ENCODE measurements at regions of chr2 and their contacts with region 1.

Region 1: DNA sequence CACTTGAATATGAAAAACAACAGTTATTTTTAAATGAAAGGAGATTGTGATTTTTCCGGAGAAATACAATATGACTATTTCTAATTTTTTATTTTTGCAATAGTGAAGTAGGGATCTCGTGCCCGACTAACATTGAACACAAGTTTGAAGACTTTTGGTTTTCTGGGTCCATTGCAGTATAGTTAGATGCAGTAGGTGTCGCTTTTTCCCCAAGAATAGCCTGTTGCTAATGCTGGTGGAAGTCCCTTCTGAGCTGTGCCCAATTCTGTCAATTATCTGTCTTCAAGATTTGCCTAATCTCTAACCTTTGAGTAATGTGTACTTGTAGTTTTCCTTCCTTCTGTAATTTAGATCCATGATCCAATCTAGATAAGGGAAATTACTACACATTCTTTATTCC is 36.5 kb downstream of the SEMA4F start:
- DNase-seq: peak; percentile 27 to 63 (median 51)
- ATAC-seq: peak; percentile 94
- H3K4me3 ChIP-seq: no peak overlapping the region
- H3K27ac ChIP-seq: no peak overlapping the region
- H3K4me1 ChIP-seq: no peaks in the 10 kb centered on the region
- H3K27me3 ChIP-seq: peaks cover 3 to 18% of the 10 kb centered on the region in 2 experiments; a peak in 4 of 5 replicates
- CTCF ChIP-seq: peak; percentile 72 to 87 (median 75); a peak in 5 of 6 replicates
- EP300 ChIP-seq: no peak
- POLR2A ChIP-seq: no peak
- RAD21 ChIP-seq: peak; percentile 94 to 95

Region 2: GRCh38 chr2:74379851-74380789 is 310.5 kb before region 1 on chr2 and contains the start of gene DCTN1:
- CTCF ChIA-PET with region 1: no interaction called
- POLR2A ChIA-PET with region 1: no interaction called
- in situ Hi-C with region 1: no loop called
- intact Hi-C with region 1: no loop called
- DNase-seq: peak; percentile 43 to 52 (median 48)
- ATAC-seq: peak; percentile 96
- H3K4me3 ChIP-seq: no peak within 1 kb of the TSS
- H3K27ac ChIP-seq: no peak within 1 kb of the TSS
- H3K4me1 ChIP-seq: peaks cover 8 to 16% of the 10 kb centered on the region in 2 experiments; a peak in 4 of 5 replicates
- H3K27me3 ChIP-seq: no peaks in the 10 kb centered on the region
- CTCF ChIP-seq: no peak
- EP300 ChIP-seq: no peak
- POLR2A ChIP-seq: no peak
- RAD21 ChIP-seq: no peak
- polyA plus RNA-seq, gene DCTN1: 23.9 to 28.6 TPM

Region 3: GRCh38 chr2:74715078-74715791 is 24.7 kb after region 1 on chr2:
- CTCF ChIA-PET with region 1: no interaction called
- POLR2A ChIA-PET with region 1: interaction called, 4 read pairs
- in situ Hi-C with region 1: no loop called
- intact Hi-C with region 1: loop called (anchors 2 kb)
- DNase-seq: peak; percentile 81 to 85 (median 84)
- ATAC-seq: peak; percentile 98
- H3K4me3 ChIP-seq: peak overlapping the region; percentile 39
- H3K27ac ChIP-seq: no peak overlapping the region
- H3K4me1 ChIP-seq: peaks cover 0 to 7% of the 10 kb centered on the region in 2 experiments; a peak in 2 of 5 replicates
- H3K27me3 ChIP-seq: peaks cover 14 to 34% of the 10 kb centered on the region in 2 experiments
- CTCF ChIP-seq: peak; percentile 92 to 98 (median 94)
- EP300 ChIP-seq: no peak
- POLR2A ChIP-seq: no peak
- RAD21 ChIP-seq: peak; percentile 75 to 86

Region 4: DNA sequence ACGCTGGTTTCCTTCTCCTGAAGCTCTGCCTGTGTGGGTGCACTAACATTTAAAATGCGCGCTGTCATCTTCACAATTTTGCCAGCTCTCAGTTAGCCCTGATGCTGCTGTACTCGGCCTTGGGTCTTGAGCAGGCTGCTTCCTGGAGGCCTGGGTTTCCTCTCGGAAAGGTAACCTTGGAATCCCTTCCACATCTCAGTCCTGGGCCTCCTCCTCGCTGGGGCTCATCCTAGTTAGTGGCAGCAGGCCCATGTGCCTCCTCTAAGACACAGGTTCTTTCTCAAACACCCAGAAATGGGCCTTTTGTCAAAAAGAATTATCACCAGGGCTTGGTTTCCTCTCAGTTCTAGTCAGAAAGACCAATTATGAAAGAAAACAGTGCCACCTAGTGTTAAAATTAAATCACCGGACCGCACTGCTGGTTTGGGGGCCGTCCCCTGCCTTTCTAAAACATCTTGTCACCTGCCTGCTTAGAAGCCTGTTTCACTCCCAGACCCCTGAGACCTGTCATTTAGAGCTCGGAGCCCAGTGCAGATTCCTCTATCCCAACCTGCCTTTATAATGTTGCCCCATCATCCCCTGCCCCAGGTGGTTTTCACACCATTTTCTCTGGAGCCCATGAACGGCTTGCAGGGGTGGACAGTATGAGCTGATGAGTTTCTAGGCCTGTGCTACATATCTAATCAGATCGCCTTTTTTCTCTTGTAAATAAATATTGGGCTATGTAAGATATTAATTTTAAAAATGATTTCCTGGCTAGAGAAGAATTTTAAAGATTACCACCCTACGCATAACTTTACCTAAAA is 185.7 kb after region 1 on chr2:
- CTCF ChIA-PET with region 1: interaction called, 19 read pairs
- POLR2A ChIA-PET with region 1: interaction called, 3 read pairs
- in situ Hi-C with region 1: no loop called
- intact Hi-C with region 1: loop called (anchors 1 kb)
- DNase-seq: peak; percentile 57 to 63 (median 60)
- ATAC-seq: peak; percentile 98
- H3K4me3 ChIP-seq: no peak overlapping the region
- H3K27ac ChIP-seq: no peak overlapping the region
- H3K4me1 ChIP-seq: no peaks in the 10 kb centered on the region
- H3K27me3 ChIP-seq: no peaks in the 10 kb centered on the region
- CTCF ChIP-seq: peak; percentile 62 to 76 (median 66)
- EP300 ChIP-seq: no peak
- POLR2A ChIP-seq: no peak
- RAD21 ChIP-seq: peak; percentile 77 to 87

Region 5: GRCh38 chr2:75035444-75036353 is 345.1 kb after region 1 on chr2:
- CTCF ChIA-PET with region 1: no interaction called
- POLR2A ChIA-PET with region 1: no interaction called
- in situ Hi-C with region 1: loop called (anchors 10 kb)
- intact Hi-C with region 1: no loop called
- DNase-seq: no peak
- ATAC-seq: no peak
- H3K4me3 ChIP-seq: no peak overlapping the region
- H3K27ac ChIP-seq: no peak overlapping the region
- H3K4me1 ChIP-seq: no peaks in the 10 kb centered on the region
- H3K27me3 ChIP-seq: no peaks in the 10 kb centered on the region
- CTCF ChIP-seq: no peak
- EP300 ChIP-seq: no peak
- POLR2A ChIP-seq: no peak
- RAD21 ChIP-seq: no peak

Region 6: DNA sequence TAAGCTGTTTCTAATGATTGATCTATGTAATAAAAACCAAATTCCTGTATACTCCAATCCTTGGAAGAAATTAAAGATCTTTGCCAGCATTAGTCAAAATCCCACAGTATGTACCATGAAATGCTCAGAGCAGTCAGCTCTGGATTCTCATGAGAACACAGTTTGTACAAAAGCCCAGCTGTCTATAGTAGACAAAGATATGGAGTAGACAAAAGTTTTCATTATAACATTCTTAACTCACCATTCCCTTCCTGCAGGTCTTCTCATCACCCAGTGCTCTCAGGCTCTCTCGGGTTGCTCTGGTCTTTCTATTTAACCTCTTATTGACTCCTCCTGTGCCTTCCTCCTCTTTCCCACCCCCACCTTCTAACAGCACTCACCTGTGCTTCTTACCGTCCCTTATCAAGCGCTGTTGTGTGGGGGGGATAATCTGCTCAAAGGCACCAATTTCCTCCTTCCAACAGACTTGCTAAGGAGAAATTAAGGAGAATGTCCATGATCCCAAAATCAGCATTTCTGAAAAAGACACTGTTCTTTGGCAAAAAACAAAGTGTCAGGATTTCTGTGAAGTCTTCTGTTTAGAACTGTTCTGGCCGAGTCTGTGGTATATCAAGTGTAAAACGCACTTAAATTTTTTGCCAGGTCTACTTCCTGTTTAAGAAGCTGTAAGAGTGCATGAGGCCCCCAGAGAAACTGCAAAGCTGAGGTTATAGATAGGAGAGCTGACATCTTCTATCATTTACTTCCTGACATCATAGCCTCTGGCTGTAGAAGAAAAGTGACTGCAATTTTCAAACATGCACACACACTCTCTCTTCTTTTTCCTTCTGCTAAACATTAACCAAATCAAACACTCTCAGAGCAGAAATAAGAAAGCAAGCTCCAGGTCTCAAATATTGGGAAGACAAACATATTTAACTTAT is 726.1 kb after region 1 on chr2:
- CTCF ChIA-PET with region 1: no interaction called
- POLR2A ChIA-PET with region 1: no interaction called
- in situ Hi-C with region 1: no loop called
- intact Hi-C with region 1: loop called (anchors 10 kb)
- DNase-seq: no peak
- ATAC-seq: no peak
- H3K4me3 ChIP-seq: no peak overlapping the region
- H3K27ac ChIP-seq: no peak overlapping the region
- H3K4me1 ChIP-seq: no peaks in the 10 kb centered on the region
- H3K27me3 ChIP-seq: no peaks in the 10 kb centered on the region
- CTCF ChIP-seq: no peak
- EP300 ChIP-seq: no peak
- POLR2A ChIP-seq: no peak
- RAD21 ChIP-seq: no peak

Region 7: DNA sequence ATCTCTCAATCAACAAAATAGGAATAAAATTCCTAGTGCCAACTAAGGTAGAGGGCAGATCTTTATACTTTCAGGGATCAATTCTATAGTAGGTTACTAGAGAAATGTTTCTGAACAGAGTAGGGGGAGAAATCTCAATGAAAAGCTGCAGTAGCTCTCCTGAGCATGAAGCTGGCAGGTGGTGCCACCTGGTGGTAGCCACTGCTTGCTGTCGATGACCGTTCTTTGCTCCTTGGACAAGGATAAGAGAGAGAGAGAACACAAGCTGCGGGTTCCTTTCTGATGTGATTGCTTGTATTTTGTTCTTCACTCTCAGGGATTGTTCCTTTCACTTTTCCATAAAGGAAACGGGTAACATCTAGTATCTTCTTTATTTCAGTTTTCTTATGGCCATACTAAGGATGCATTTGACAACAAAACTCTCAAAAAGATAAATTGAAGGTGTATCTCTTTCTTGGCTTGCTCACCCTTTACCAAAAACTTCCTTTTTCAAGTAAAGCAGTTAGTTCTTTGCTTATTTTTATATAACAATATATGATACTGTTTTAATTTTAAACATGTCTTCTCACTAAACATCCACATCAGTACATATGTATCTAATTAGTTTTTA is 937.4 kb after region 1 on chr2:
- CTCF ChIA-PET with region 1: no interaction called
- POLR2A ChIA-PET with region 1: no interaction called
- in situ Hi-C with region 1: no loop called
- intact Hi-C with region 1: loop called (anchors 5 kb)
- DNase-seq: peak; percentile 59 to 79 (median 66)
- ATAC-seq: peak; percentile 95
- H3K4me3 ChIP-seq: no peak overlapping the region
- H3K27ac ChIP-seq: no peak overlapping the region
- H3K4me1 ChIP-seq: no peaks in the 10 kb centered on the region
- H3K27me3 ChIP-seq: peaks cover 2 to 11% of the 10 kb centered on the region in 2 experiments; a peak in 3 of 5 replicates
- CTCF ChIP-seq: peak; percentile 82 to 88 (median 84)
- EP300 ChIP-seq: no peak
- POLR2A ChIP-seq: no peak
- RAD21 ChIP-seq: peak; percentile 40 to 73

Measured in K562 (cell line).